Vagina (tissue), 2 donors: ENCODE measurements at regions of chr13 and their contacts with region 1.

Region 1: GRCh38 chr13:37995092-37995491 is 125.5 kb upstream of the TRPC4 start:
- DNase-seq: no peak
- H3K4me3 ChIP-seq: no peak overlapping the region
- H3K27ac ChIP-seq: no peak overlapping the region
- H3K4me1 ChIP-seq: no peaks in the 10 kb centered on the region
- H3K27me3 ChIP-seq: no peaks in the 10 kb centered on the region
- CTCF ChIP-seq: no peak
- POLR2A ChIP-seq: no peak

Region 2: DNA sequence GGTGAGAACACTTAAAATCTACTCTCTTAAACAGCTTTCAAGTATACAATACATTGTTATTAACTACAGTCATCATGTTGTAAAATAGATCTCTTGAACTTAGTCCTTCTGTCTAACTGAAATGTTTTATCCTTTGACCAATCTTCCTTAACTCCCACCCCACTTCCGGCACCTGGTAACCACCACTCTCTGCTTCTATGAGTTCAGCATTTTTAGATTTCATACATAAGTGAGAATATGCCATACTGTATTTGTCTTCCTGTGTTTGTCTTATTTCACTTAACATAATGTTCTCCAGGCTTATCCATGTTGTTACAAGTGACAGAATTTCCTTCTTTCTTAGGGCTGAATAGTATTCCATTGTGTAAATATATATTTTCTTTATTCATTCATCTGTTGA is 18.6 kb after region 1 on chr13:
- intact Hi-C with region 1: loop called (anchors 2 kb)
- DNase-seq: no peak
- H3K4me3 ChIP-seq: no peak overlapping the region
- H3K27ac ChIP-seq: no peak overlapping the region
- H3K4me1 ChIP-seq: no peaks in the 10 kb centered on the region
- H3K27me3 ChIP-seq: no peaks in the 10 kb centered on the region
- CTCF ChIP-seq: no peak
- POLR2A ChIP-seq: no peak